Caco-2 (cell line): ENCODE measurements at regions of chr5 and their contacts with region 1.

Region 1: DNA sequence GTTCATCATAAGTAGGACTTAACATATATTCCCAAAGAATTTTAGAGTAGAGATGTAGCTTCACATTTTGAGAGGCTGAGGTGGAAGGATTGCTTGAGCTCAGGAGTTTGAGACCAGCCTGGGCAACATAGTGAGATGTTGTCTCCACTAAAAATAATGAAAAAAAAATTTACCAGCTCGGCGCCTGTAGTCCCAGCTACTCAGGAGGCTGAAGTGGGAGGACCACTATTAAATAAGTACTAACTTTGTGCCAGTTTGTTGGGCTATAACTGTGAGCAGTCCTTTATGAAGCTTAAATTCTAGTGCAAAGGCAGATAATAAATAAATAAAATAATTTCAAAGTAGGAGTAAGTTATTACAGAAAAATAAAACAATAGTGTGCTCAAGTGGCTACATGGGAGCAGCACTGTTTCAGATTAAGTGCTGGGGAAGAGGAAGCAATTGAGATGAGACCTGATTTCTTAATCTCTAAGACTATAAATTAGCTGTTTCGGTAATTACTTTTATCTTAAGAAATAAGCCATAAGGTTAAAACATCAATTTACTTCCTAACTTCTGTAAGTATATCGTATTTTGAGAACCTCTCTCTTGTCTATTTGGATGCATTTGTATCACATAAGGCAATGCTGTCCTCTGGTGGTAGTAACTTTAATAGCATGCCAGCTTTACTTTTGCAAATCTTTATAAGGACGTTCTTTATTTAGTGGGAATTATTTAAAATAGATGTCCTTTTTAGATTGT is 98.9 kb downstream of the CSNK1G3 start:
- DNase-seq: peak in 1 of 2 experiments; percentile 51
- H3K4me3 ChIP-seq: no peak overlapping the region
- H3K4me3 Mint-ChIP-seq: no peak overlapping the region
- H3K27ac Mint-ChIP-seq: no peak overlapping the region
- H3K4me1 ChIP-seq: no peaks in the 10 kb centered on the region
- H3K4me1 Mint-ChIP-seq: no peaks in the 10 kb centered on the region
- H3K27me3 ChIP-seq: no peaks in the 10 kb centered on the region
- H3K27me3 Mint-ChIP-seq: no peaks in the 10 kb centered on the region
- CTCF ChIP-seq: peak; percentile 77 to 85

Region 2: DNA sequence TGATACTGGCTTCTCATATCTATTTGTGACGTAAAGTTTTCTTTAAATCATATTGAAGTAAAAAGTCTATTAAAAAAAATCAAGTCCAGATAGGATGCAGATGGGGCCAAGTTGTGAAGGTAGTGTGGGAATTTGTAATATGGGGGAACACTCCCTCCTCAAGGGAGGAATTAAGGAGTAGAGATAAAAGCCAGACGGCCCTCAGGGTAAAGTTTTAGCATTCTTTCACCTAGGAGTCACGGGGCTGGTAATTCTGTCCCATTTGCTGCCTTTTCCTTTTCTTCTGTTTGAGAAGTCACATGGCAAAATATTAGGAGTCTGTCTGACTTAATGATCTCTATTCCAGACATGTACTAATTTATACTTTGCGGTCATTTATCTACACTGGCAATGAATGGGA is 703.6 kb before region 1 on chr5:
- CTCF ChIA-PET with region 1: no interaction called
- POLR2A ChIA-PET with region 1: no interaction called
- intact Hi-C with region 1: loop called (anchors 10 kb)
- DNase-seq: peak; percentile 50 to 58
- H3K4me3 ChIP-seq: no peak overlapping the region
- H3K4me3 Mint-ChIP-seq: peak overlapping the region; percentile 30
- H3K27ac Mint-ChIP-seq: peak overlapping the region; percentile 75
- H3K4me1 ChIP-seq: peaks cover 32% of the 10 kb centered on the region
- H3K4me1 Mint-ChIP-seq: peaks cover 33% of the 10 kb centered on the region
- H3K27me3 ChIP-seq: no peaks in the 10 kb centered on the region
- H3K27me3 Mint-ChIP-seq: no peaks in the 10 kb centered on the region
- CTCF ChIP-seq: no peak

Region 3: GRCh38 chr5:123371575-123372179 is 239.2 kb before region 1 on chr5:
- CTCF ChIA-PET with region 1: no interaction called
- POLR2A ChIA-PET with region 1: no interaction called
- intact Hi-C with region 1: loop called (anchors 5 kb)
- DNase-seq: peak; percentile 49 to 69
- H3K4me3 ChIP-seq: no peak overlapping the region
- H3K4me3 Mint-ChIP-seq: no peak overlapping the region
- H3K27ac Mint-ChIP-seq: no peak overlapping the region
- H3K4me1 ChIP-seq: peaks cover 20% of the 10 kb centered on the region
- H3K4me1 Mint-ChIP-seq: peaks cover 16% of the 10 kb centered on the region
- H3K27me3 ChIP-seq: no peaks in the 10 kb centered on the region
- H3K27me3 Mint-ChIP-seq: no peaks in the 10 kb centered on the region
- CTCF ChIP-seq: peak; percentile 36 to 49

Region 4: GRCh38 chr5:123659495-123659894 is 48.7 kb after region 1 on chr5:
- CTCF ChIA-PET with region 1: no interaction called
- POLR2A ChIA-PET with region 1: no interaction called
- intact Hi-C with region 1: no loop called
- DNase-seq: no peak
- H3K4me3 ChIP-seq: no peak overlapping the region
- H3K4me3 Mint-ChIP-seq: no peak overlapping the region
- H3K27ac Mint-ChIP-seq: no peak overlapping the region
- H3K4me1 ChIP-seq: no peaks in the 10 kb centered on the region
- H3K4me1 Mint-ChIP-seq: no peaks in the 10 kb centered on the region
- H3K27me3 ChIP-seq: no peaks in the 10 kb centered on the region
- H3K27me3 Mint-ChIP-seq: peaks cover 2% of the 10 kb centered on the region
- CTCF ChIP-seq: no peak

Region 5: GRCh38 chr5:124043456-124043855 is 432.6 kb after region 1 on chr5:
- CTCF ChIA-PET with region 1: no interaction called
- POLR2A ChIA-PET with region 1: no interaction called
- intact Hi-C with region 1: no loop called
- DNase-seq: peak; percentile 70 to 73
- H3K4me3 ChIP-seq: no peak overlapping the region
- H3K4me3 Mint-ChIP-seq: no peak overlapping the region
- H3K27ac Mint-ChIP-seq: no peak overlapping the region
- H3K4me1 ChIP-seq: no peaks in the 10 kb centered on the region
- H3K4me1 Mint-ChIP-seq: no peaks in the 10 kb centered on the region
- H3K27me3 ChIP-seq: no peaks in the 10 kb centered on the region
- H3K27me3 Mint-ChIP-seq: no peaks in the 10 kb centered on the region
- CTCF ChIP-seq: peak; percentile 45 to 85